BJ (cell line): ENCODE measurements at regions of chr1 and their contacts with region 1.

Region 1: GRCh38 chr1:33602287-33602686 is 129.8 kb downstream of the ZSCAN20 start:
- DNase-seq: no peak
- H3K4me3 ChIP-seq: no peak overlapping the region
- H3K27me3 ChIP-seq: no peaks in the 10 kb centered on the region
- CTCF ChIP-seq: no peak

Region 2: GRCh38 chr1:33312413-33312749 is 289.9 kb before region 1 on chr1:
- CTCF ChIA-PET with region 1: no interaction called
- POLR2A ChIA-PET with region 1: no interaction called
- DNase-seq: no peak
- H3K4me3 ChIP-seq: no peak overlapping the region
- H3K27me3 ChIP-seq: no peaks in the 10 kb centered on the region; the same call in 1 of the 2 replicates
- CTCF ChIP-seq: no peak

Region 3: GRCh38 chr1:33524586-33524985 is 77.7 kb before region 1 on chr1:
- CTCF ChIA-PET with region 1: no interaction called
- POLR2A ChIA-PET with region 1: no interaction called
- DNase-seq: no peak
- H3K4me3 ChIP-seq: no peak overlapping the region
- H3K27me3 ChIP-seq: no peaks in the 10 kb centered on the region
- CTCF ChIP-seq: no peak

Region 4: GRCh38 chr1:33616773-33617172 is 14.5 kb after region 1 on chr1:
- CTCF ChIA-PET with region 1: interaction called, 11 read pairs
- POLR2A ChIA-PET with region 1: no interaction called
- DNase-seq: no peak
- H3K4me3 ChIP-seq: no peak overlapping the region
- H3K27me3 ChIP-seq: no peaks in the 10 kb centered on the region; the same call in 1 of the 2 replicates
- CTCF ChIP-seq: no peak